Astrocyte of the cerebellum (primary cell): ENCODE measurements at regions of chr11 and their contacts with region 1.

Region 1: DNA sequence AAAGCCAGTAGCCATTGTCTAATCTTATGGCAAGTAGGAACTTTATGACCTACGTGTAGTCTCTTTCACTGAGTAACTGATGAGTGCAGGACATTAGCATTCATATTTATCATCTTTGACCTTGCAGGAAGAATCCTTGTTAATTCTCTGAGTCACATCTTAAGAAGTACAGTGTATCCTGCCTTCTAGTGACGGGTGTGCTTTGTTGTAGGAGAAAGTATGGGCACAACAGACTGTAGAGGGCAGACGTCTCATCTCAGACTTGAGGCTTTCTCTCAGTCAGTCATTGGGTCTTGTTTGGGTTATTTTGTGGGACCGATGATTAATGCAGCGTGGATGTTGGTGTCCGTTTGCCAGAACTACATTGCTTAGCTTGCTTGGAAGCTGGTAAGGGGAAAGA is 6.8 kb downstream of the RNF214 start:
- DNase-seq: peak; percentile 47
- H3K4me3 ChIP-seq: no peak overlapping the region
- CTCF ChIP-seq: peak; percentile 64

Region 2: DNA sequence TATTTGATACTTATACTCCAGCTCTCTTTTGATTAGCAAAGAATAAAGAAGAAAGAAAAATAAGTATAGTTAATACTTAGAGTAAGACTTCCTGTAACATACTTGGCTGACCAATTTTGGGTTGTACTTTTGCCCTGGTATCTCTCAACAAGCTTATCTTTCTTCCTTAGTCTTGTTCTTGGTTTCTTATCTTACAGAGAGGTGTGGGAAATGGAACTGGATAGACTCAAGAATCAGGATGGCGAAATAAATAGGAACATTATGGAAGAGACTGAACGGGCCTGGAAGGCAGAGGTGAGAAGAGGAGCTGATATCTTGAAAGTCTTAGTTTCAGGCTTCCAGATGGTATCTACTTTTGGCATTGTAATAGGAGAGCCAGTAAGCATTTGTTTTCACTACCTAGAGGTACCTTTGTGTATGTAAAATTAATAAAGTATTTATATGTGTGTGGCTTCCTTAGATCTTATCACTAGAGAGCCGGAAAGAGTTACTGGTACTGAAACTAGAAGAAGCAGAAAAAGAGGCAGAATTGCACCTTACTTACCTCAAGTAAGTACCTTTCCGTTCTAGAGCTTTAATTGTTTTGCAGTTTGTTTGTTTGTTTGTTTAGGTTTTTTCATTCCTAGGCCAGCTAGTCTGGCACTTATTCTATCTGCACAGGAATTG is 40.5 kb after region 1 on chr11:
- in situ Hi-C with region 1: loop called (anchors 5 kb)
- DNase-seq: no peak
- H3K4me3 ChIP-seq: no peak overlapping the region
- CTCF ChIP-seq: no peak

Region 3: DNA sequence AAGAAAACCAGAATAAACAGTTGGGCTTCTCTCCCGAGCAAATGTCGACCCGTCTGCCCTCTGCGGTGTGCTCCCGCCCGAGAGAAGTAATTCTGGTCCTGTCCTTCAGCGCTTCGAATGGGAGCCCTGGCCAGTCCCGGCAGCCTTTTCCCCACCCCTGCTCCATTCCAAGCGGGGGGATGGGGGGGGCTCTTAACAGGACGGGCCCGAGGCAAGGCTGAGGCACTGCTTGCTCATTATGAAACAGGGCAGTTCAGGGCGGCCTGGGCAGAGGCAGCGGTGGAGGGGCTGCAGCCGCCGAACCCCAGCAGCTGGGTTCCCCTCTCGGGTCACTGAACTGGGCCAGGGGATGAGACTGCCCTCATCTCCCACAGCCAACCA is 61.0 kb after region 1 on chr11:
- in situ Hi-C with region 1: no loop called
- DNase-seq: peak; percentile 24
- H3K4me3 ChIP-seq: no peak overlapping the region
- CTCF ChIP-seq: no peak

Region 4: DNA sequence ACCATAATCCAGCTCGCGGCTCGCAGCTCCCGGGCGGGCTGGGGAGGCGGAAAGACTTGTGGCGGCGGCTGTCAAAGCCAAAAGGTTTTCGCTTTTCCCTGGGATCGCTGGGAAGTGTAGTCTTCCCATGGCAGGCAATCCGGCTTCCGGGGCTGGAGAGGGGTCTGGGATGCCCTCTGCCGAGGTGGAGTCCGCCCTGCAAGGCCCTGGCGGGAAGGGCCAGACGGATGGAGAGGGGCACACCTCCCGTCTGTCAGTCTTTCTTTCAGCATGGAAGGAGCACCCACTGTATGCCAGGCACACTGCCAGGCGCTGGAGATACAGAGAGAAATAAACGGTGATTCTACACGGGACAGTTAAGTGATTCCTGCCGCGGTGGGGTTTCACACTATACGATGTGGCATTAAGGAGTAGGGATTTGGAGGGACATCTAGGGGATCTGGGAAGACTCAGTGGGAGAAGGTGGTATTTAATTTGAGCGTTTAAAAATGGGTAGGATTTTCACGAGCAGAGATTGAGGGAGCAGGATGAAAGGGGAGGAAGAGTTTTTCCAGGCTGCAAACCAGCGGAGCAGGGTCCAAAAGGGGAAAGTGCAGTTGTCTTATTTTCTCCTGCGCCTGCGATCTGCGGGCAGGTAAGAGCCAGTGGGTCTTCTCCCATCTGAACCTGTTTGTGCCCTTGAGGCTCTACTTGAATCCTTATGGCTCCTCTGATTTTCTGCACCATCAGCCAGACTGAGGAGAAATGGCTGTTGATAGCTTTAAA is 77.1 kb after region 1 on chr11 and contains the start of gene BACE1:
- in situ Hi-C with region 1: loop called (anchors 5 kb)
- DNase-seq: peak; percentile 66
- H3K4me3 ChIP-seq: peak within 1 kb of the TSS; percentile 86
- CTCF ChIP-seq: peak; percentile 52

Region 5: DNA sequence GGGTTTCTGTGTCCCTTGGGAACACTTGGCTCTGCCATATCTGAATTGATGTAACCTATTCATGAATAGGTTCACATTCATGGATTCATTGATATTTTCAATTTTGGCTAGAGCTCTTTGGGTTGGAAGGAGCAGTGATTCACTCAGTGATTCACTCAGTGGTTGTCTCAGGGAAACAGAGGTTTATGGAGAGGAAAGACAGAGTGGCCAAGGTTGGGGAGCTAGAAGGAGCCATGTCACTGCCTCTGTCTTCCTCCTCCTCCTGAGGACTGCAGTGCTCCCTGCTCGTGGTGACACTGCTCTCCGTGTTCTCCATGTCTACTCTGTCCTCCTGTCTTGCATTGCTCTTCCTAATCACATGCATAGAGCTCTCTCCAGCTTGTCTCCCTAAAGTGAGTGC is 105.7 kb after region 1 on chr11:
- in situ Hi-C with region 1: no loop called
- DNase-seq: no peak
- H3K4me3 ChIP-seq: no peak overlapping the region
- CTCF ChIP-seq: no peak

Region 6: DNA sequence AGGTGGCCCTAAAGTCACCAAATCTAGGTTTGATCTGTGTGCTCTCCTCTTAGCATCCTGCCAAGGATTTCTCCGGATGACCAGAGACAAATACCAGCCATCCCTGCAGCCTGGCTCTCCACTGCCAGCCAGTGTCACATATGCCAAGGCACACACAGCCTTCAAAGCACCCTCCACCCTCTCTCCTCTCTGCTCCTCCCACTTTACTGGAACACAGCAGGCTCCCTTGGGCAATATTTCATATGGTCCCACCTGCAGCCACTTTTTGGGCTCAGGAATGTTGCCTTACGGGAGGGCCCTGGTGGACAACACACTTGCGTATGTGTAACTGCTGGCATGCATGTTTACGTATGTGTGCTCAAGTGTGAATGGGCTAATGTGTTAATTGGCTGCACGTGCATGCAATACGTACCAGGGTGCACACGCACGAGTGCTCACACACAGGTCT is 272.2 kb after region 1 on chr11:
- in situ Hi-C with region 1: no loop called
- DNase-seq: no peak
- H3K4me3 ChIP-seq: no peak overlapping the region
- CTCF ChIP-seq: no peak